ENCODE measurements at regions of chr11 and their contacts with region 1.

Region 1: DNA sequence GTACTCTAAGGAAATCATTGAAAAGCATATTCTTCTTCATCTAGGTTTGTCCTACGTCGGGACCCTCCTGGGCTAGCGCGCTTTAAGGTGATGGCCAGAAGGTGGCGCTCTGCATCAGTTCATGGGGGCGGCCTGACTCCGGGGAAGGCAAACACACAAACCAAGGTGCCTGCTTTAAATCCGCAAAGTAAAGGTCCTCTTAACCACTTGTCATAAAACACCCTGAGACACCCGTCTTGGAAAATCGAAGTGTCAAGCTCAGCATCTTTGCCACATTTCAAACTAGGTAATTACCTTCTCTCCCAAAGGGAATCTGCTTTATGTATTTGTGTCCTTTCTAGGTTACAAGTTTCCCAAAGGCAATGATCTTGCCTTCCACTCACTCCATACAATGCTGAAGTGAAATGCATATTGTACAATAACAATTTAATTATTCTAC is 33.9 kb downstream of the LMO2 start:
- DNase-seq: peak; percentile 92

Region 2: DNA sequence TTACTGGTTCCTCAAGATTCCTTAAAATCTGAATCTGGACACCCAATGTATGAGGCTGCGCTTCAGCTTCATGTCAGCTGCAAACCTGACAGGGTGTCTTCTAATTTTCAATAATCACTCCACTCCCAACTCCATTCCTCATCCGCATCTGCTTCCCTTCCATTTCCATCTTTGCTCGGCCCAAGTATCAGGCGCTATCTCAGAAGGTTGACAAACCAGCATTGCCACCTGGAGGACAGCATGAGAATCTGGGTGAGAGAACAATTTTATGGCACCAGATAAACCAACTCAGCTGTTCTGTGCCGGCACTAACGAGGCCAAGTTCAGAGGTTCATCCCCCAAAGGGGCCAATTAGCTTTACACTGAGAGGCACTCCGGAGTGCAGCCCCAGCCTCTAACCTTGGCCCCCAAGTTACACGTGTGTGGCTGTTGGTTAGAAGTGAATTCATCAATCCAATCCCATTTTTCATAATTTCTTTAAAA is 113.1 kb after region 1 on chr11:
- intact Hi-C with region 1: loop called (anchors 1 kb)
- DNase-seq: no peak

Region 3: GRCh38 chr11:33987975-33988580 is 130.1 kb after region 1 on chr11:
- intact Hi-C with region 1: loop called (anchors 5 kb)
- DNase-seq: peak; percentile 78

Measured in cardiac septum (tissue), 1 donor.